ENCODE measurements at regions of chr20 and their contacts with region 1.

Region 1: DNA sequence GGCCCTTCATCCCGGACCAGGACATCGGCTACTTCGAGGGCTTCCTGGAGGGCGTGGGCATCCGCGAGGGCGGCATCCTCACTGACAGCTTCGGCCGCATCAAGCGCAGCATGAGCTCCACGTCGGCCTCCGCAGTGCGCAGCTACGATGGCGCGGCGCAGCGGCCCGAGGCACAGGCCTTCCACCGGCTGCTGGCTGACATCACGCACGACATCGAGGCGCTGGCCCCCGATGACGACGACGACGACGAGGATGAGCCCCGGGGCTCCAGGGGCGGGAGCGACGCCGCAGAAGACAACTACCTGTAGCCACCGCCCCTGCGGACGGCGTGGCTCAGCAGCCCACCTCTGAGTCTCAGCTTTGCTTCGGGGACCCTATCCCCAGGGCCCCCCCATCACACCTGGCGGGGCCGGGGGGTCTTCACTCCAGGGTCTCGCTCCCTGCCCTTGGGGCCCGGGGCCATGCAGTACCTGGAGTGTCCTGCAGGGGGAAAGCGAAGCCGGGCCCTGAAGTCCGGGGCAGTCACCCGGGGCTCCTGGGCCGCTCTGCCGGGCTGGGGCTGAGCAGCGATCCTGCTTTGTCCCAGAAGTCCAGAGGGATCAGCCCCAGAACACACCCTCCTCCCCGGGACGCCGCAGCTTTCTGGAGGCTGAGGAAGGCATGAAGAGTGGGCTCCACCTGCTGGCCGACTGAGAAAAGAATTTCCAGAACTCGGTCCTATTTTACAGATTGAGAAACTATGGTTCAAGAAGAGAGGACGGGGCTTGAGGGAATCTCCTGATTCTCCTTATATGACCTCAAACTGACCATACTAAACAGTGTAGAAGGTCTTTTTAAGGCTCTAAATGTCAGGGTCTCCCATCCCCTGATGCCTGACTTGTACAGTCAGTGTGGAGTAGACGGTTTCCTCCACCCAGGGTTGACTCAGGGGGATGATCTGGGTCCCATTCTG is 20.8 kb upstream of the HCK start:
- DNase-seq: peak; percentile 94
- H3K27ac ChIP-seq: no peak overlapping the region
- CTCF ChIP-seq: peak; percentile 100

Region 2: GRCh38 chr20:31835977-31836852 is 195.1 kb before region 1 on chr20:
- CTCF ChIA-PET with region 1: interaction called, 14 read pairs
- POLR2A ChIA-PET with region 1: no interaction called
- DNase-seq: peak; percentile 97
- H3K27ac ChIP-seq: peak overlapping the region; percentile 44
- CTCF ChIP-seq: no peak

Region 3: GRCh38 chr20:31860710-31861345 is 170.5 kb before region 1 on chr20:
- CTCF ChIA-PET with region 1: interaction called, 31 read pairs
- POLR2A ChIA-PET with region 1: no interaction called
- DNase-seq: no peak
- H3K27ac ChIP-seq: no peak overlapping the region
- CTCF ChIP-seq: no peak

Region 4: DNA sequence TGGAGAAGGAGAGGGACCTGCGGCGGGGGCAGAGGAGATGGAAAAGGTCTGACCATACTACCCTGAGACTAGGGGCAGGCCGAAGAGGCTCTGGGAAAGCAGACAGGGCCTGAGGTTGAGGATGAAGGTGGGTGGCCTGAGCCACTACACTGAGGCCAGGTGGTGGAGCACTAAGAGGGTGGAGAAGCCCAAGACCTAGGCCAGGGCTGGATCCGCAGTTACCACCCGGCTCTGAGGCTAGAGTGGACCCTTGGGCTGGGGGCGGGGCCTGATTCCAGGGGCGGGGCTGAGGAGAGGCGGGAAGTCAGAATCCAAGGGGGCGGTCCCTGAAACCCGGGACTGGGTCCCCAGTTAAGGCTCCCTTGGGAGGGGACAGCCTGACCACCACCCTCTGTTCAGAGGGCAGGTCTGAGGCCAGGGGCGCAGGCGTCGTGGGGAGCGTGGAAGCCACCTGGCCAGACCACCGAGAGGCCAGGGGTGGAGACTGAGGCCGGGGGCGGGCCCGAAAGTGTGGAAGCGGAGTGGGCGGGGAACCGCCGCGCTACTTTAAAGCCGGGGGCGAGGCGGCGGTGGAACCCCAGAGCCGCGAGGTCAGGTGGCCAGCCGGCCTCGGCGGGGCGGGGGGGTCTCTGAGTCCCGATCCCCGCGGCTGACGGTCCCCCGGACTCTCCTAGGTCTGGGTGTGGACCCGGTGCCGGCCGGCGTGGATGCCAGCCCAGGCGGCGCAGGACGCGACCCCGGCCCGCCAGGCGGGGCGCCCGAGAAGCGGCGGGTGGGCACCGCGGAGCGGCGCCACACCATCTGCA is 12.8 kb before region 1 on chr20:
- CTCF ChIA-PET with region 1: interaction called, 47 read pairs
- POLR2A ChIA-PET with region 1: no interaction called
- DNase-seq: peak; percentile 91
- H3K27ac ChIP-seq: no peak overlapping the region
- CTCF ChIP-seq: no peak

Region 5: GRCh38 chr20:32091888-32092346 is 60.6 kb after region 1 on chr20:
- CTCF ChIA-PET with region 1: interaction called, 41 read pairs
- POLR2A ChIA-PET with region 1: no interaction called
- DNase-seq: peak; percentile 79
- H3K27ac ChIP-seq: no peak overlapping the region
- CTCF ChIP-seq: peak; percentile 98

Region 6: GRCh38 chr20:32149596-32150170 is 118.4 kb after region 1 on chr20:
- CTCF ChIA-PET with region 1: no interaction called
- POLR2A ChIA-PET with region 1: no interaction called
- DNase-seq: no peak
- H3K27ac ChIP-seq: no peak overlapping the region
- CTCF ChIP-seq: no peak

Measured in RWPE1 (cell line).